Tibial artery (tissue), 4 donors: ENCODE measurements at regions of chr6 and their contacts with region 1.

Region 1: GRCh38 chr6:70684794-70685493 is 17.3 kb downstream of the SMAP1 start:
- DNase-seq: no peak
- H3K4me3 ChIP-seq: no peak overlapping the region
- H3K27ac ChIP-seq: no peak overlapping the region
- H3K4me1 ChIP-seq: peaks cover 0 to 27% (median 9%) of the 10 kb centered on the region in 4 donors
- H3K27me3 ChIP-seq: no peaks in the 10 kb centered on the region
- CTCF ChIP-seq: no peak

Region 2: GRCh38 chr6:70551566-70551965 is 133.4 kb before region 1 on chr6:
- intact Hi-C with region 1: loop called (anchors 5 kb)
- DNase-seq: no peak
- H3K4me3 ChIP-seq: no peak overlapping the region
- H3K27ac ChIP-seq: no peak overlapping the region
- H3K4me1 ChIP-seq: peaks cover 0 to 20% (median 2%) of the 10 kb centered on the region in 4 donors
- H3K27me3 ChIP-seq: no peaks in the 10 kb centered on the region
- CTCF ChIP-seq: no peak

Region 3: DNA sequence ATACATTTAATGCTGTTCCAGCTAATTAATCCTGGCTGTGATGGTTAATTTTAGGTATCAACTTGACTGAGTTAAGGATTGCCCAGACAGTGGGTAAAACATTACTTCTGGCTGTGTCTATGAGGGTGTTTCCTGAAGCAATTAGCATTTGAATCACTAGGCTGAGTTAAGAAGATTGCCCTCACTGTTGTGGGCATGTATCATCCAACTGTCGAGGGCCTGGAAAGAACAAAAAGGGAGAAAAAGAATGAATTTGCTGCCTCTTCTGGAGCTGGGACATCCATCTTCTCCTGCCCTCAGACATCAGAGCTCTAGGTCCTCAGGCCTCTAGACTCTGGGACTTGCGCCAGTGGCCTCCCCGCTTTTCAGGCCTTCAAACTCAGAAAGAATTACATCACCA is 83.9 kb before region 1 on chr6:
- intact Hi-C with region 1: no loop called
- DNase-seq: no peak
- H3K4me3 ChIP-seq: no peak overlapping the region
- H3K27ac ChIP-seq: no peak overlapping the region
- H3K4me1 ChIP-seq: no peaks in the 10 kb centered on the region
- H3K27me3 ChIP-seq: no peaks in the 10 kb centered on the region
- CTCF ChIP-seq: no peak